ENCODE measurements at regions of chr5 and their contacts with region 1.

Region 1: DNA sequence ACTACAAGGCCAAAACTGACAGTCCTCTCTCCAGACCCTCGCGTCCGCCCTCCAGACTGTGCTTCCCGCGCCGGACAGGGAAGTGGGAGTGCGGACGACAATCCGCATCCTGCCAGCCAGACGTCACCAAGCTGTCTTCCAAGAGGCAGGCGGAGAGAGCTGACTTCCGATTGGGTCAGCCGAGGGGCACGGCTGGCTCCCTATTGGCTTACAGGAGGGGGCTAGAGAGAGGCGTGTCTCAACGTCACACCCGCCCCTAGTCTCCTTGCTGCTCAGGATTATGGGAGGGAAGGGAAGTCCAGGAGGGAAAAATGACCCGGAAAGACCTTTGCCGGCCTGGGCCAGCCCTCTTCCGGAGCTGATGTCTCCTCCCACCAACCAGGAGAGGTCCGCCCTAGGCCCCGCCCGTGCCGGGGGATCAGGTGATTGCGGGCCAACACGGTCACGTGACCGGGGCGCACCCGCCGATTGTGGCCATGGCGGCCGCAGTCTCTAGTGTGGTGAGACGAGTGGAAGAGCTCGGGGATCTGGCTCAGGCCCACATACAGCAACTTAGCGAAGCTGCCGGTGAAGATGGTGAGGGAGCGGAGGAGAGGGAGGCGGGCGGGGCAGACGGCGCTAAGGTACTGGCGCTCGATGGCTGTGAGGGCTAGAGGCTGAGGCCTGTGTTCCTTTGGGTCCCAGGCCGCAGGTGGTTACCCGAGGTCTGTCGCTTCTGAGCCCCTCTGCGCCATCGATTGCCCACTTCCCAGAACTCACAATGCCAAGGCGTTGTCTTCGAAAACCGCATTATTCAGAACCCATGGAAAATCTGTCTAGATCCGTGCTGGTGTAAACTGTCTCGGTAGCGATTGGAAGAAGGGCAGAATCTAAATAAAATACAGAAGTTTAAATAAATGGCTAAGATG is at the start of gene RIMOC1:
- DNase-seq: peak; percentile 94 to 99 (median 97)
- ATAC-seq: peak; percentile 89
- H3K4me3 ChIP-seq: peak within 1 kb of the TSS; percentile 73 to 83
- H3K4me3 Mint-ChIP-seq: peak within 1 kb of the TSS; percentile 99
- H3K27ac ChIP-seq: peak within 1 kb of the TSS; percentile 84 to 91
- H3K27ac Mint-ChIP-seq: peak within 1 kb of the TSS; percentile 100
- H3K4me1 ChIP-seq: peaks cover 17% of the 10 kb centered on the region
- H3K4me1 Mint-ChIP-seq: peaks cover 44% of the 10 kb centered on the region
- H3K27me3 ChIP-seq: no peaks in the 10 kb centered on the region
- H3K27me3 Mint-ChIP-seq: no peaks in the 10 kb centered on the region
- CTCF ChIP-seq: no peak
- total RNA-seq, gene RIMOC1: 9.0 to 9.2 TPM

Region 2: GRCh38 chr5:40755407-40756365 is 1148.5 kb before region 1 on chr5 and contains the start of gene TTC33:
- CTCF ChIA-PET with region 1: no interaction called
- POLR2A ChIA-PET with region 1: no interaction called
- intact Hi-C with region 1: loop called in 1 of 2 experiments (anchors 1 kb)
- DNase-seq: peak; percentile 86 to 96 (median 94)
- ATAC-seq: peak; percentile 85
- H3K4me3 ChIP-seq: peak within 1 kb of the TSS; percentile 93 to 98
- H3K4me3 Mint-ChIP-seq: no peak within 1 kb of the TSS
- H3K27ac ChIP-seq: peak within 1 kb of the TSS; percentile 79 to 89
- H3K27ac Mint-ChIP-seq: no peak within 1 kb of the TSS
- H3K4me1 ChIP-seq: peaks cover 18% of the 10 kb centered on the region
- H3K4me1 Mint-ChIP-seq: peaks cover 24% of the 10 kb centered on the region
- H3K27me3 ChIP-seq: no peaks in the 10 kb centered on the region
- H3K27me3 Mint-ChIP-seq: no peaks in the 10 kb centered on the region
- CTCF ChIP-seq: peak; percentile 62
- total RNA-seq, gene TTC33: 6.7 to 7.1 TPM

Region 3: GRCh38 chr5:41856644-41857491 is 47.3 kb before region 1 on chr5:
- CTCF ChIA-PET with region 1: interaction called, 9 read pairs
- POLR2A ChIA-PET with region 1: interaction called, 4 read pairs
- intact Hi-C with region 1: loop called in 1 of 2 experiments (anchors 1 kb)
- DNase-seq: peak in 8 of 9 experiments; percentile 23 to 84 (median 53)
- ATAC-seq: peak; percentile 89
- H3K4me3 ChIP-seq: no peak overlapping the region
- H3K4me3 Mint-ChIP-seq: no peak overlapping the region
- H3K27ac ChIP-seq: no peak overlapping the region
- H3K27ac Mint-ChIP-seq: no peak overlapping the region
- H3K4me1 ChIP-seq: no peaks in the 10 kb centered on the region
- H3K4me1 Mint-ChIP-seq: peaks cover 5% of the 10 kb centered on the region
- H3K27me3 ChIP-seq: no peaks in the 10 kb centered on the region
- H3K27me3 Mint-ChIP-seq: no peaks in the 10 kb centered on the region
- CTCF ChIP-seq: peak; percentile 72

Region 4: GRCh38 chr5:41924872-41925554 is 20.9 kb after region 1 on chr5 and contains the start of gene FBXO4:
- CTCF ChIA-PET with region 1: interaction called, 4 read pairs
- POLR2A ChIA-PET with region 1: interaction called, 50 read pairs
- intact Hi-C with region 1: loop called (anchors 1 kb)
- DNase-seq: peak; percentile 79 to 96 (median 88)
- ATAC-seq: peak; percentile 96
- H3K4me3 ChIP-seq: peak within 1 kb of the TSS; percentile 79 to 87
- H3K4me3 Mint-ChIP-seq: peak within 1 kb of the TSS; percentile 87
- H3K27ac ChIP-seq: peak within 1 kb of the TSS; percentile 91 to 98
- H3K27ac Mint-ChIP-seq: peak within 1 kb of the TSS; percentile 99
- H3K4me1 ChIP-seq: peaks cover 16% of the 10 kb centered on the region
- H3K4me1 Mint-ChIP-seq: peaks cover 28% of the 10 kb centered on the region
- H3K27me3 ChIP-seq: no peaks in the 10 kb centered on the region
- H3K27me3 Mint-ChIP-seq: no peaks in the 10 kb centered on the region
- CTCF ChIP-seq: peak; percentile 57
- total RNA-seq, gene FBXO4: 4.4 to 4.7 TPM

Region 5: GRCh38 chr5:42994246-42995151 is 1090.4 kb after region 1 on chr5:
- CTCF ChIA-PET with region 1: no interaction called
- POLR2A ChIA-PET with region 1: interaction called, 8 read pairs
- intact Hi-C with region 1: loop called in 1 of 2 experiments (anchors 10 kb)
- DNase-seq: peak; percentile 75 to 94 (median 88)
- ATAC-seq: peak; percentile 63
- H3K4me3 ChIP-seq: peak overlapping the region; percentile 78 to 92
- H3K4me3 Mint-ChIP-seq: peak overlapping the region; percentile 99
- H3K27ac ChIP-seq: peak overlapping the region; percentile 97
- H3K27ac Mint-ChIP-seq: peak overlapping the region; percentile 100
- H3K4me1 ChIP-seq: peaks cover 23% of the 10 kb centered on the region
- H3K4me1 Mint-ChIP-seq: peaks cover 41% of the 10 kb centered on the region
- H3K27me3 ChIP-seq: no peaks in the 10 kb centered on the region
- H3K27me3 Mint-ChIP-seq: no peaks in the 10 kb centered on the region
- CTCF ChIP-seq: peak; percentile 93

Region 6: GRCh38 chr5:43514816-43515677 is 1610.9 kb after region 1 on chr5 and contains the start of gene C5orf34:
- CTCF ChIA-PET with region 1: no interaction called
- POLR2A ChIA-PET with region 1: no interaction called
- intact Hi-C with region 1: loop called in 1 of 2 experiments (anchors 1 kb)
- DNase-seq: peak; percentile 84 to 97 (median 95)
- ATAC-seq: peak; percentile 86
- H3K4me3 ChIP-seq: peak within 1 kb of the TSS; percentile 68 to 77
- H3K4me3 Mint-ChIP-seq: peak within 1 kb of the TSS; percentile 97
- H3K27ac ChIP-seq: peak within 1 kb of the TSS; percentile 82
- H3K27ac Mint-ChIP-seq: peak within 1 kb of the TSS; percentile 95
- H3K4me1 ChIP-seq: peaks cover 15% of the 10 kb centered on the region
- H3K4me1 Mint-ChIP-seq: peaks cover 31% of the 10 kb centered on the region
- H3K27me3 ChIP-seq: no peaks in the 10 kb centered on the region
- H3K27me3 Mint-ChIP-seq: no peaks in the 10 kb centered on the region
- CTCF ChIP-seq: no peak
- total RNA-seq, gene C5orf34: 0.61 to 0.95 TPM